B cell (primary cell): ENCODE measurements at regions of chr6 and their contacts with region 1.

Region 1: GRCh38 chr6:89432875-89433251 is at the start of gene ANKRD6:
- DNase-seq: peak; percentile 87
- ATAC-seq: peak; percentile 98
- H3K4me3 ChIP-seq: peak within 1 kb of the TSS; percentile 34 to 72 (median 69)
- H3K4me3 Mint-ChIP-seq: peak within 1 kb of the TSS; percentile 92
- H3K27ac ChIP-seq: no peak within 1 kb of the TSS
- H3K27ac Mint-ChIP-seq: peak within 1 kb of the TSS; percentile 60
- H3K4me1 ChIP-seq: peaks cover 10 to 12% of the 10 kb centered on the region in 2 donors
- H3K4me1 Mint-ChIP-seq: peaks cover 13% of the 10 kb centered on the region
- H3K27me3 ChIP-seq: no peaks in the 10 kb centered on the region
- H3K27me3 Mint-ChIP-seq: peaks cover 4% of the 10 kb centered on the region
- CTCF ChIP-seq: peak; percentile 83
- total RNA-seq, gene ANKRD6: 10.5 and 15.0 TPM in 2 replicates

Region 2: DNA sequence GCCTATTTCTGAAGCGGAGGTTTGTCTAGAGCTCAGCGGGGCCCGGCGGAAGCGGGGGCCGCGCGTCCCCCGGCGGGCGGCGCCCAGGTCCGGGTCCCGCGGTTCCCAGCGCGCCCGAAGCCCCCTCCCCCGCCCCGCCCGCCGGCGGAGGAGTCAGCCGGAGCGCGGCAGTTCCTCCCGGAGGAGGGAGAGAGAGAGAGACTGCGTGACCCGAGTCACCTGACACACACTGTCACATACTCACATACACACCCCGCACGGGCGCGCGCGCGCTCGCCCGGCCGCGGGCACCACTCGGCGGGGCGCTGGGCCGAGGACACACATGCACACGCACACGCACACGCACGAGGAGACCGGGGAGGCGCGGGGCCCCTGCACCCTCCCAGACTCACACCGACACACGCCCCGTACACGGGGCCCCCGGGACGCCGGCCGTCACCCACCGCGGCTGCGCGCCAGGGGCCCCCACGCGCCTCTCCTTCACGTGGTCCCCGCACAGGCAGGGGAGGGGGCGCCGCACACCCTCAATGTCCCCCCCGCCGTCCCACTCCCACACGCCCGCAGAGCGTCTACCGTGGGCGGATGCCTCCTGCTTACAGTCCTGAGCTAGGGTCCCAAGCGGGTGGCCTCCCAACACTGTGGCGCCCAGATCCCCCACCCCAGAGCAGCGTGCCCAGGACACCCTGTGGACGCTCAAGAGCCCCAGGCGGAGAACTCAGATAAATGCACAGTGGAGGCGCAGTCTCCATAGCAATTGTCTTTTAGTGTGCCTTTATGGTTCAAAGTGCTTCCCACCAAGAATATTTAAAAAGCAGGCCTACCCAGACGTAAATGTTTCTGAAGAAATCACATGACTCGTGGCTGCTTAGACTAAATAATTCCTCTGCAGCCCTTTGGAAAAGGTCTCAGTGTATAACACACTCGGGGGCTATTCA is 20.5 kb before region 1 on chr6 and contains the start of gene RRAGD:
- CTCF ChIA-PET with region 1: interaction called, 6 read pairs
- POLR2A ChIA-PET with region 1: no interaction called
- intact Hi-C with region 1: loop called (anchors 1 kb)
- DNase-seq: peak; percentile 81
- ATAC-seq: peak; percentile 69
- H3K4me3 ChIP-seq: peak within 1 kb of the TSS; percentile 44 to 81 (median 66)
- H3K4me3 Mint-ChIP-seq: peak within 1 kb of the TSS; percentile 96
- H3K27ac ChIP-seq: peak within 1 kb of the TSS in 1 of 2 donors; percentile 13
- H3K27ac Mint-ChIP-seq: peak within 1 kb of the TSS; percentile 80
- H3K4me1 ChIP-seq: peaks cover 16 to 19% of the 10 kb centered on the region in 2 donors
- H3K4me1 Mint-ChIP-seq: peaks cover 19% of the 10 kb centered on the region
- H3K27me3 ChIP-seq: peaks cover 0 to 34% (median 17%) of the 10 kb centered on the region in 4 experiments
- H3K27me3 Mint-ChIP-seq: peaks cover 25% of the 10 kb centered on the region
- CTCF ChIP-seq: no peak
- total RNA-seq, gene RRAGD: 2.7 and 4.5 TPM in 2 replicates

Region 3: DNA sequence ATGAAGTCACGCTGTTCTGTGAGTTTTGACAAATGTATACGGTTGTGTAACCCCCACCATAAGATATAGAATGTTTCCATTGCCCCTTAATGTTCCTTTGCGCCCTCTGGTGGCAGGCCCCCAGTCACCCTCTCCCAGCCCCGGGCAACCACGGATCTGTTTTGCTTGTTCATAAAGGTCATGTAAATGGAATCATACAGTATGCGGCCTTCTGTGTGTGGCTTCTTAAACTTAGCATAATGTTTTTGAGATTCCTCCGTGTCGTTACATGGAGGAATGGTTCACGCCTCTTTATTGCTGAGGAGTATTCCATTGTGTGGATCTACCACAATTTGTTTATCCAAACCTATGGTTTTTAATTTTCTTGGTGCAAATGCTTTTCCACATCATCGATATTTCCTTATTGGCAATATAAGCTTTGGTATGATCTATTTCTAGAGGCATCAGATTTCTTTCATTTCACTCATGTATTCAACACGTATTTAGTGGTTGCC is 177.3 kb after region 1 on chr6:
- CTCF ChIA-PET with region 1: interaction called, 61 read pairs
- POLR2A ChIA-PET with region 1: no interaction called
- intact Hi-C with region 1: loop called (anchors 1 kb)
- DNase-seq: peak; percentile 80
- ATAC-seq: peak; percentile 91
- H3K4me3 ChIP-seq: no peak overlapping the region
- H3K4me3 Mint-ChIP-seq: no peak overlapping the region
- H3K27ac ChIP-seq: no peak overlapping the region
- H3K27ac Mint-ChIP-seq: no peak overlapping the region
- H3K4me1 ChIP-seq: no peaks in the 10 kb centered on the region
- H3K4me1 Mint-ChIP-seq: no peaks in the 10 kb centered on the region
- H3K27me3 ChIP-seq: no peaks in the 10 kb centered on the region
- H3K27me3 Mint-ChIP-seq: no peaks in the 10 kb centered on the region
- CTCF ChIP-seq: peak; percentile 91

Region 4: DNA sequence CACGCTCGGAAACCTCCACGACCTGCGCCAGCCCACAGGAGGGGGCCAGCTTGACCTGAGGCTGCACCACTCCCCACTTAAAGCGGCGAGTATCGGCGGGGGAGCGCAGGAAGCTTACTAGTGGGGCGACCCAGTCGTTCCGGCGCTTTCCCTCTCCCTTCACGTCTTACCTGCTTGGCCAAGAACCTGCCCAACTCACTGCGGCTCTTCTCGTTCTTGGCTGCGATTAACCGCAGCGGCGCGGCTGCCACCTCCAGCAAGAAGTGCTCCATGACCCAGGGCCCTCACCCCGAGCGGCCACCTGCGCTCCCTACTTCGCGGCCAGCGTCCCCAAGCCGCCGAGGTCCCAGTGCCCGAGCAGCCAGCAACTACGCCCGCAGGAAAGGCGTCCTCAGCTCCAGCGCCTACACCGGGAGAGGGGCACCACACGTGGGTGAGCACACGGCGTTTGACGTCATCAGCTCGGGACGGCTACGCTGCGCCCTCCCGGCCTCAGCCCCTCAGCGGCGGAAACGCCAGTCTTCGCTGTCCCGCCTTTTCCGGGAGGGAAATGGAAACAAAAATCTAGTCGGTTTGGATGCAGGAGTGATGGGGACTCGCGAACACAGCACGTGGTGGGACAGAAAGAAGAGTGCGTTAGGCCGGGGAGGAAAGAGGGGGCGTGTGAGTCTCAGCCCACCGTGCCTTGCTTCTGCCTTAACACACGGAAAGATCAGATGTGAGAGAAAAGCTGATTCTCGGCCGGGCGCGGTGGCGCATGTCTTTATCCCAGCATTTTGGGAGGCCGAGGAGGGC is 386.7 kb after region 1 on chr6 and contains the start of gene MDN1:
- CTCF ChIA-PET with region 1: no interaction called
- POLR2A ChIA-PET with region 1: no interaction called
- intact Hi-C with region 1: loop called (anchors 10 kb)
- DNase-seq: peak; percentile 93
- ATAC-seq: peak; percentile 91
- H3K4me3 ChIP-seq: peak within 1 kb of the TSS; percentile 41 to 99 (median 89)
- H3K4me3 Mint-ChIP-seq: peak within 1 kb of the TSS; percentile 98
- H3K27ac ChIP-seq: peak within 1 kb of the TSS; percentile 80 to 85
- H3K27ac Mint-ChIP-seq: peak within 1 kb of the TSS; percentile 96
- H3K4me1 ChIP-seq: peaks cover 24 to 32% of the 10 kb centered on the region in 2 donors
- H3K4me1 Mint-ChIP-seq: peaks cover 29% of the 10 kb centered on the region
- H3K27me3 ChIP-seq: no peaks in the 10 kb centered on the region
- H3K27me3 Mint-ChIP-seq: no peaks in the 10 kb centered on the region
- CTCF ChIP-seq: no peak
- total RNA-seq, gene MDN1: 59.5 and 66.6 TPM in 2 replicates

Region 5: DNA sequence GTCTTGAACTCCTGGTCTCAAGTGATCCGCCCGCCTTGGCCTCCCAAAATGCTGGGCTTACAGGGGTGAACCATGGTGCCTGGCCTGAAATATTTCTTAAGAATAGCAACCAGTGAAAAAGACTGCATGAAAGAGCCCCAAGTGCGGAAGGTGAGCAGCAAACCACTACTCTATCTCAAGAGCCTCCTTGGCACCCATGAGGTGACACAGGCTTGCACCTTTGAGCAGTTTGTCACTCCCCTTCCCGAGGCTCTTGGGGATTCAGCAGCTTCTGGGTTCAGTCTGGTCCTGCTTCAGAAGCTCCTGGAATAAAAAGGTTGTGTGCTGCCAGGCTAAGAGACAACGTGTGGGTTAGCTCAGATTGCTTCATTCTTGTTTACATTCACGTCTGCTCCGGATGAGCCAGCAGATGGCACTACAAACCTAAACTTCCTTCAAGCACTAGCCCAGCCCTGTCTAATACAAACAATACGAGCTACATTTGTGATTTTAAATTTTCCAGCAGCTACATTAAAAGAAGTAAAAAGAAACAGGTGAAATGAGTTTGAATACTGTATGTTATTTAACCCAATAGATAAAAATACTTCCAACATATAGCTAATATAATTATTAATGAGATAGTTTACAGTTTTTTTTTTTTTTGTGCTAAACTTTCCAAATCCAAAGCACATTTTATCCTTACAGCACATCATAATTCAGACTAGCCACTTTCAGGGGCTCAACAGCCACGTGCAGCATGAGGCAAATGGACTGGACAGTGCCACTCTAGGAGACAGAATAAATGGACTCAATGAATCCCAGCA is 507.6 kb after region 1 on chr6:
- CTCF ChIA-PET with region 1: interaction called, 5 read pairs
- POLR2A ChIA-PET with region 1: no interaction called
- intact Hi-C with region 1: loop called (anchors 2 kb)
- DNase-seq: peak; percentile 68
- ATAC-seq: peak; percentile 81
- H3K4me3 ChIP-seq: no peak overlapping the region
- H3K4me3 Mint-ChIP-seq: no peak overlapping the region
- H3K27ac ChIP-seq: no peak overlapping the region
- H3K27ac Mint-ChIP-seq: peak overlapping the region; percentile 64
- H3K4me1 ChIP-seq: no peaks in the 10 kb centered on the region
- H3K4me1 Mint-ChIP-seq: peaks cover 7% of the 10 kb centered on the region
- H3K27me3 ChIP-seq: no peaks in the 10 kb centered on the region
- H3K27me3 Mint-ChIP-seq: no peaks in the 10 kb centered on the region
- CTCF ChIP-seq: peak; percentile 79